ENCODE measurements at regions of chr10 and their contacts with region 1.

Region 1: DNA sequence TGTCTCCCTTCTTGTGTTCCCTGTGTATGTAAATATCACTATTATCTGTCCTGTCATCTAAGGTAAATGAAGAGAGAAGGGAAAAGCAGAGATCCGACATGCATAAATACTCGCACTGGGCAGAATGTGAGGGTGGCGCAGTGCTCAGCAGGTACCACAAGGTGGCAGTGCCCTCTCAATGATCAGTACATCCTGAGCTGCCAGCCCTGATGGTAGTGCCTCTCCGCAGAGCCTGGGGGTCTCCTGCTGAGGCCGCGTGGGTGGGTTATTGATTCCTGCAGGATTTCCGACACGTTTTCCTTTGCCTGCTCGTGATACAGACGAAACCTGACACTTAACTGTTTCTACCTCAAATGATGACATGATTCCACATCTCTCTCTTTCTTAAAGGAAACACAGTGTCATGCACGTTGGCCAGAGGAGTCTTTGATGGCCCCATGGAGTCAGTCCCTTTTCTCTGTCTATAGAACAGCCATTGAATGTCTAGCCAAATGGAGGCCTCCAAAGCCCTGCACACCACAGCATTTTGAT is 19.8 kb downstream of the RGR start:
- DNase-seq: peak; percentile 80
- H3K4me3 Mint-ChIP-seq: no peak overlapping the region
- H3K27ac Mint-ChIP-seq: no peak overlapping the region
- H3K4me1 Mint-ChIP-seq: peaks cover 28% of the 10 kb centered on the region
- H3K27me3 Mint-ChIP-seq: peaks cover 17% of the 10 kb centered on the region

Region 2: DNA sequence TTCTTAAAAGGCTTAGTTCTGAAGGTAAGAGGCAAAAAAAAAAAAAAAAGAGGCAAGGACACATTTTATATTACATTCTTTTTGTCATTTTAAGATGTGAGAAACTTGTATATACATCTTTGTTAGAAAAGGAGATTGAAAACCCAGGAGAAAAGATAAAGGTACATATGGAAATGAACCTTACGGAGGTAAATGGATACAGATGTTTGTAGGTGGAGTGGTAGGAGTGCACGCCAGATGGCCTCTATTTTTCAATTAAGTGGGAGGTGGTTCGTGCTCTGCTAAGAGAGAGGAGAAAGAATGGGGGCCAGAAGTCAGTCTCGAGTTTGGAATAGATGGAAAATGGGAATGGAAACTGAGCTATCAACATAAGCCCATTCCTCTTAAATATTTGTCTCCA is 747.9 kb before region 1 on chr10:
- CTCF ChIA-PET with region 1: no interaction called
- POLR2A ChIA-PET with region 1: no interaction called
- intact Hi-C with region 1: no loop called
- DNase-seq: no peak
- H3K4me3 Mint-ChIP-seq: no peak overlapping the region
- H3K27ac Mint-ChIP-seq: no peak overlapping the region
- H3K4me1 Mint-ChIP-seq: no peaks in the 10 kb centered on the region
- H3K27me3 Mint-ChIP-seq: no peaks in the 10 kb centered on the region

Region 3: DNA sequence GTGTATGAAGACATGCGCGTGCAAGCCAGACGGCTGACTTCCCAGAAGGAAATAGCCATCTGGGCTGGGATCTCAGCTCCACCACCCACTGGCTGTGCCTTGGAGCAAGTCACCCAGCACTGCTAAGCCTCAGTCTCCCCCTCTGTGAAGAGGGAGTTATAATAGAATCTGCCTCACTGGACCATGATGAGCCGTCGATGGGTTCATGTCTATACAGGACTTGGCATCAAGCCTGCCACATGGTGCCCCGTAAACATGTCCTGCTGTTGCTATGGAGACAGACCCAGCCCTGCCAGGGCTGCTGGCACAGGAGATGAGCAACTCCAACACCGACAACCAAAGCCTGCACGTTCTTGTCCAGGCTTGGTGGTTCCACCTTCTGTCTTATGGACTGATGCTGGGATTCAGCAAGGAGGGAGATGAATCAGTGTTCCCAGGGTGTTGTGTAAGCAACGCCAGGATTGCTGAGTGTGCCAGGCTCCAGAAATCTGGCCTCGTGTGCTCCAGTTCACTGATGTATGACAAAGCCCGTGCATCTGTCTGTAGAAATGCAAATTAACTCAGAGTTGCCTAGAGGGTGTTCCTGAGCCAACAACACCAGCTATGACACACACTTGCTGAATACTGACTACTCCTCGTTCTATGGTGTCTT is 85.5 kb before region 1 on chr10:
- CTCF ChIA-PET with region 1: no interaction called
- POLR2A ChIA-PET with region 1: no interaction called
- intact Hi-C with region 1: no loop called
- DNase-seq: peak; percentile 50
- H3K4me3 Mint-ChIP-seq: no peak overlapping the region
- H3K27ac Mint-ChIP-seq: no peak overlapping the region
- H3K4me1 Mint-ChIP-seq: peaks cover 8% of the 10 kb centered on the region
- H3K27me3 Mint-ChIP-seq: no peaks in the 10 kb centered on the region

Region 4: GRCh38 chr10:84291384-84291783 is 26.7 kb after region 1 on chr10:
- CTCF ChIA-PET with region 1: interaction called, 5 read pairs
- POLR2A ChIA-PET with region 1: no interaction called
- intact Hi-C with region 1: loop called (anchors 2 kb)
- DNase-seq: no peak
- H3K4me3 Mint-ChIP-seq: no peak overlapping the region
- H3K27ac Mint-ChIP-seq: no peak overlapping the region
- H3K4me1 Mint-ChIP-seq: peaks cover 20% of the 10 kb centered on the region
- H3K27me3 Mint-ChIP-seq: no peaks in the 10 kb centered on the region

Region 5: DNA sequence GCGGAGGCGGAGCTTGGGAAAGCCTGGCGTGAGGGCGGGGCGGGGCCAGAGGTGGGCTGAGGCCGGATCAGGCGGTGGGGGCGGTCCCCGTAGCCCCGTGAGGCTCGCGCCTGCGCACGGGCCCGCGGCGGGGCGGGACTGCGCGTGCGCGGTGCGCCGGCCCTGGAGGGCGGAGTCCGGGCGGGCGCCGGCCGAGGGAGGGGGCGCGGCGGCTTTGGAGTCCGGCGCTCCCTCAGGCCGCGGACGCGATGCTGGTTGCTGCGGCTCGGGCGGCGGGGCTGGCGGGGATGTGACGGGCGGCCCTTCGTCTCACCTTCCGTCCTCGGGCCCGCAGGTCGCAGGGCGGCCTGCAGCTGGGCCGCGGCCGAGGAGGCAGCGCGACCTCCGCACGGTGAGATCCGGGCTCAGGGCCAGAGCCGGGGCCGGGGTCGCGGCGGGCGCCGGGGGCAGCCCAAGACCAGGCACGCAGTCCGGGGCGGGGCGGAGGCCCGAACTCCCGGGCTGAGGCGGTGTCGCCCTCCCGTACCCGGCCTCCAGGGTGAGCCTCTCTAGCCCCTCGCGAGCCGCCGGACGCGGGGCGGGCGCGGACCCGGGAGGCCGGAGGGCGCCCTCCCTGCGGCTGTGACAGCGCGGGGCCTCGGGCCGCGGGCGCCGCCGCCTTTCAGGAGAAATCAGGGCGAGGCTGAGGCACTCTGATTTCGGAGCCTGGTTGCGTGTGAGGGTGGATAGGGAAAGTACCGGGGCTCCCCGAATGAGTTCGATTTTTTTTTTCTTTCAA is 63.9 kb after region 1 on chr10 and contains the start of gene CCSER2:
- CTCF ChIA-PET with region 1: interaction called, 29 read pairs
- POLR2A ChIA-PET with region 1: interaction called, 4 read pairs
- intact Hi-C with region 1: loop called (anchors 1 kb)
- DNase-seq: peak; percentile 98
- H3K4me3 Mint-ChIP-seq: peak within 1 kb of the TSS; percentile 88
- H3K27ac Mint-ChIP-seq: peak within 1 kb of the TSS; percentile 98
- H3K4me1 Mint-ChIP-seq: peaks cover 30% of the 10 kb centered on the region
- H3K27me3 Mint-ChIP-seq: no peaks in the 10 kb centered on the region
- total RNA-seq, gene CCSER2: 69.8 to 73.5 TPM

Region 6: GRCh38 chr10:84352251-84352842 is 87.7 kb after region 1 on chr10:
- CTCF ChIA-PET with region 1: interaction called, 37 read pairs
- POLR2A ChIA-PET with region 1: interaction called, 5 read pairs
- intact Hi-C with region 1: no loop called
- DNase-seq: peak; percentile 81
- H3K4me3 Mint-ChIP-seq: no peak overlapping the region
- H3K27ac Mint-ChIP-seq: peak overlapping the region; percentile 28
- H3K4me1 Mint-ChIP-seq: peaks cover 71% of the 10 kb centered on the region
- H3K27me3 Mint-ChIP-seq: no peaks in the 10 kb centered on the region

Region 7: GRCh38 chr10:84375011-84375410 is 110.3 kb after region 1 on chr10:
- CTCF ChIA-PET with region 1: interaction called, 12 read pairs
- POLR2A ChIA-PET with region 1: no interaction called
- intact Hi-C with region 1: loop called (anchors 1 kb)
- DNase-seq: peak; percentile 18
- H3K4me3 Mint-ChIP-seq: no peak overlapping the region
- H3K27ac Mint-ChIP-seq: peak overlapping the region; percentile 65
- H3K4me1 Mint-ChIP-seq: peaks cover 51% of the 10 kb centered on the region
- H3K27me3 Mint-ChIP-seq: no peaks in the 10 kb centered on the region

Region 8: GRCh38 chr10:84548869-84549268 is 284.2 kb after region 1 on chr10:
- CTCF ChIA-PET with region 1: interaction called, 12 read pairs
- POLR2A ChIA-PET with region 1: no interaction called
- intact Hi-C with region 1: no loop called
- DNase-seq: peak; percentile 31
- H3K4me3 Mint-ChIP-seq: no peak overlapping the region
- H3K27ac Mint-ChIP-seq: no peak overlapping the region
- H3K4me1 Mint-ChIP-seq: no peaks in the 10 kb centered on the region
- H3K27me3 Mint-ChIP-seq: peaks cover 4% of the 10 kb centered on the region

Measured in activated CD4-positive, alpha-beta memory T cell treated with anti-CD3 and anti-CD28 coated beads for 36 hours (primary cell).